ENCODE measurements at regions of chr2 and their contacts with region 1.

Region 1: GRCh38 chr2:37168217-37168981 is 11.6 kb upstream of the EIF2AK2 start:
- H3K4me3 ChIP-seq: no peak overlapping the region
- H3K27ac ChIP-seq: no peak overlapping the region
- H3K4me1 ChIP-seq: no peaks in the 10 kb centered on the region
- CTCF ChIP-seq: peak; percentile 33; the same call in 1 of the 2 replicates

Region 2: DNA sequence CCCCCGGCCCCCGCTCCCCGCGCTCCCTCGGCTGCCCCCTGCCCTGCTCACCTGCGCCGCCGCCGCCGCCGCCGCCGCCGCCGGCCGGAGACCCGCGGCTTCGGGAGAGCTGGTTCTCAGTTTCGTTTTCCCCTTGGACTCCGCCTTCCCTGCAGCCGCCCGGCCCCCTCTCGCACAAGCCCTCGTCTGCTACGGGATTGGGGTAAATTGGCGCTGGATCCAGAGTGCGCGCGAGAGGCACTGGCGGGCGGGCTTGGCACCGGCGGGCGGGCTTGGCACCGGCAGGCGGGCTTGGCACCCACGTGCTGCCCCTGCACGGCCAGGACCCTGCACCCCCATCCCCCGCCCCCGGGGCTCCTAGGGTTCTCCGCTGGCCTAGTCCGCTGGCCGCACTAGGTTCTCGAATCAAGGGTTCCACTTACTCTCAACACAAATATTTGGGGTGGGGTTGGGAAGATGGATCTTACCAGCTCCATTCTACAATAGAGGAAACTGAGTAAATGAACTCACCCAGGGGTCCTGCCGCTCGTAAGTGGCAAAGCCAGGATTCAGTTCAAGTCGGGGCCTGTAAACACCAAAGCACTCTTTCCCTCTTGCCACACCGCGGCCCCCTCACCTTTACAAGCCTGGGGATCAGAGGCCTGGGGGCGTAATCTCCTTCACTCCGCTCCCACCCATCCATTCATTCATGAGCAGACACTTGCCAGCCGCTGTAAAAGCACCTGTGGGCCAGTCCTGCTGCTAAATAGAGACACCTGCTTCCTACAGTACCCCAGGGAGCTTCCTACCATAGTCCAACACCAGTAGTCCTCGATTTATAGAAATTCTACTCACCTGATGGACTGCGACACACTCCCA is 11.3 kb before region 1 on chr2 and contains the start of gene EIF2AK2:
- CTCF ChIA-PET with region 1: interaction called, 22 read pairs
- POLR2A ChIA-PET with region 1: no interaction called
- H3K4me3 ChIP-seq: peak within 1 kb of the TSS; percentile 86
- H3K27ac ChIP-seq: peak within 1 kb of the TSS; percentile 67
- H3K4me1 ChIP-seq: peaks cover 10% of the 10 kb centered on the region; the same call in 1 of the 2 replicates
- CTCF ChIP-seq: no peak

Region 3: GRCh38 chr2:37180006-37180639 is 11.7 kb after region 1 on chr2:
- CTCF ChIA-PET with region 1: interaction called, 12 read pairs
- POLR2A ChIA-PET with region 1: no interaction called
- H3K4me3 ChIP-seq: no peak overlapping the region
- H3K27ac ChIP-seq: no peak overlapping the region
- H3K4me1 ChIP-seq: no peaks in the 10 kb centered on the region
- CTCF ChIP-seq: no peak

Measured in HEK293 (cell line).